ENCODE measurements at regions of chr11 and their contacts with region 1.

Region 1: GRCh38 chr11:1389103-1389931 is 417 bp upstream of the BRSK2 start:
- DNase-seq: peak; percentile 19
- ATAC-seq: peak; percentile 99
- H3K4me3 ChIP-seq: peak overlapping the region; percentile 16; the same call in 1 of the 2 replicates
- H3K27ac ChIP-seq: no peak overlapping the region
- H3K4me1 ChIP-seq: peaks cover 6% of the 10 kb centered on the region; the same call in 1 of the 2 replicates
- H3K27me3 ChIP-seq: peaks cover 6 to 14% of the 10 kb centered on the region in 2 experiments
- CTCF ChIP-seq: no peak
- EP300 ChIP-seq: no peak
- POLR2A ChIP-seq: no peak
- RAD21 ChIP-seq: no peak

Region 2: GRCh38 chr11:1309498-1310317 is 79.6 kb before region 1 on chr11 and contains the start of gene TOLLIP:
- CTCF ChIA-PET with region 1: interaction called, 3 read pairs
- POLR2A ChIA-PET with region 1: interaction called, 3 read pairs
- RAD21 ChIA-PET with region 1: no interaction called
- SMC1A ChIA-PET with region 1: no interaction called
- in situ Hi-C with region 1: no loop called
- intact Hi-C with region 1: loop called (anchors 10 kb)
- DNase-seq: peak; percentile 56
- ATAC-seq: peak; percentile 93
- H3K4me3 ChIP-seq: peak within 1 kb of the TSS; percentile 71
- H3K27ac ChIP-seq: peak within 1 kb of the TSS; percentile 80
- H3K4me1 ChIP-seq: peaks cover 33% of the 10 kb centered on the region
- H3K27me3 ChIP-seq: no peaks in the 10 kb centered on the region
- CTCF ChIP-seq: peak in 1 of 3 experiments; percentile 31; a peak in 2 of 6 replicates
- EP300 ChIP-seq: no peak
- POLR2A ChIP-seq: peak; percentile 97
- RAD21 ChIP-seq: no peak
- polyA plus RNA-seq, gene TOLLIP: 0.47 to 1.0 TPM

Region 3: DNA sequence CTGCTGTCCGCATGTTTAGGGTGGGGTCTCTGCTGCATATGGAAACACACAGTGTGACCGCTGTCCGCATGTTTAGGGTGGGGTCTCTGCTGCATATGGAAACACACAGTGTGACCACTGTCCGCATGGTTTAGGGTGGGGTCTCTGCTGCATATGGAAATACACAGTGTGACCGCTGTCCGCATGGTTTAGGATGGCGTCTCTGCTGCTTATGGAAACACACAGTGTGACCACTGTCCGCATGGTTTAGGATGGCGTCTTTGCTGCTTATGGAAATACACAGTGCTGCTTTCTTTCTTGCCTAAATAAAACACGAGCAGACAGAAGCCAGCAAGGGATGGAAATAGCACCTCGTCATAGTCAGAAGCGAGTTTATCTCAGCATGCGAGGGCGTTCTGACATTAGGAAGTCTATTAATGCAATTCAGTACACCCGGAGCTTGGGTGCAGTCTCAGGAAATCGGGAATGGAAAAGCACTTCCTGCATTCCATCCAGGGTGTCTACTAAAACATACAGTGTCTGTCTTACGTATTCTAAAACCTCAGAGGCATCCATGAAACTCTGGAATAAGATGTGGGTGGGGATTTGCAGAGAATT is 47.3 kb before region 1 on chr11:
- CTCF ChIA-PET with region 1: no interaction called
- POLR2A ChIA-PET with region 1: no interaction called
- RAD21 ChIA-PET with region 1: no interaction called
- SMC1A ChIA-PET with region 1: no interaction called
- in situ Hi-C with region 1: no loop called
- intact Hi-C with region 1: no loop called
- DNase-seq: no peak
- ATAC-seq: no peak
- H3K4me3 ChIP-seq: no peak overlapping the region
- H3K27ac ChIP-seq: no peak overlapping the region
- H3K4me1 ChIP-seq: no peaks in the 10 kb centered on the region
- H3K27me3 ChIP-seq: no peaks in the 10 kb centered on the region
- CTCF ChIP-seq: no peak
- EP300 ChIP-seq: no peak
- POLR2A ChIP-seq: no peak
- RAD21 ChIP-seq: no peak

Measured in GM12878 (cell line).